Activated CD4-positive, alpha-beta memory T cell treated with anti-CD3 and anti-CD28 coated beads for 36 hours (primary cell): ENCODE measurements at regions of chr2 and their contacts with region 1.

Region 1: DNA sequence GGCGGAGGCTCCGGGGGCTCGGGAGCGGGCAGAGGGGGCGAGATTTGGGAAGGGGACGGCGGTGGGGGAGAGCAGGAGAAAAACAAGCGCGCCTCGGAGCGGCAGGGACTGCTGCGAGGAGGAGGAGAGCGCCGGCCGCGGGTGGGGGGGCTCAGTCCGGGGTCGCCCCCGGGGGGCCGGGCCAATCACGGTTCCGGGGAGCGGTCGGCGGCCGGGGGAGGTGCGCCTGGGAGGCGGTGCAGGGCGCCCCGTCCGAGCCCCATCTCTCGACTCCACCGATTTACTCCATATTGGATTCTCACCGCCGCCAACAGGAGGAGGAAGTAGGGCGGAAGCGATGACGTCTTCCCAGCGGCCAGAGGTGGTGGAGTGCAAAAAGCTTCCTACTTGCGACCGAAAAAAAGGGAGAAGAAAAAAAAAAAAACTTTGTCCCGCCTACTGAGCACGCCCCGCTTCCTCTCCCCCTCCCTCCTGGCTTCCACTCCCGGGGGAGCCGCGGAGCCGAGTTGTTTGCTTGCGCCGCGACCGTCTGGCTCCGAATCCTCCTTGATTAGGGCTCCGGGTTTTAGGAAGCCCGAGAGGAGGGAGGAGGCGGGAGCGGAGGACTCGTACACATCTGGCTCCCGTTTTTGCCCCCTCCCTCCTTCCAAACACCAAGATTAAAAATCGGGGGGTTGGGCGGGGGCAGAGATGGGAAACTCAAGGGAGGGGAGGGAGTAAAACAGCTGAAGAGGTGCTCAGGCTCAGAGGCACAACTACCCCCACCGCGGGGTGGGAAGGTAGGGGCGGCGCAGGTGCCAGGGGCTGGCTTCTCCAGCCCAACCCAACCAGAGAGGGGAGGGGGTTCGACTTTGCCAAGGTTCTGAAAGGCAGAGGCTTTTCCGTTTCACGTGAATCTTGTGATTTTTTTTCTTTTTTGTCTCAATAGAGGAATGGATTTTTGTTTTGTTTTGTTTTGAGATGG is at the start of gene SPRED2:
- DNase-seq: peak; percentile 86
- H3K4me3 Mint-ChIP-seq: peak within 1 kb of the TSS; percentile 88
- H3K27ac Mint-ChIP-seq: peak within 1 kb of the TSS; percentile 74
- H3K4me1 Mint-ChIP-seq: peaks cover 13% of the 10 kb centered on the region
- H3K27me3 Mint-ChIP-seq: peaks cover 22% of the 10 kb centered on the region
- total RNA-seq, gene SPRED2: 6.1 to 8.9 TPM

Region 2: GRCh38 chr2:65056215-65057053 is 376.1 kb before region 1 on chr2 and contains the start of gene CEP68:
- CTCF ChIA-PET with region 1: no interaction called
- POLR2A ChIA-PET with region 1: no interaction called
- intact Hi-C with region 1: loop called (anchors 2 kb)
- DNase-seq: peak; percentile 98
- H3K4me3 Mint-ChIP-seq: peak within 1 kb of the TSS; percentile 94
- H3K27ac Mint-ChIP-seq: peak within 1 kb of the TSS; percentile 78
- H3K4me1 Mint-ChIP-seq: peaks cover 50% of the 10 kb centered on the region
- H3K27me3 Mint-ChIP-seq: no peaks in the 10 kb centered on the region
- total RNA-seq, gene CEP68: 6.6 to 8.0 TPM

Region 3: GRCh38 chr2:65227425-65228262 is 204.9 kb before region 1 on chr2 and contains the start of gene ACTR2:
- CTCF ChIA-PET with region 1: no interaction called
- POLR2A ChIA-PET with region 1: interaction called, 8 read pairs
- intact Hi-C with region 1: loop called (anchors 1 kb)
- DNase-seq: peak; percentile 97
- H3K4me3 Mint-ChIP-seq: peak within 1 kb of the TSS; percentile 100
- H3K27ac Mint-ChIP-seq: peak within 1 kb of the TSS; percentile 99
- H3K4me1 Mint-ChIP-seq: peaks cover 32% of the 10 kb centered on the region
- H3K27me3 Mint-ChIP-seq: no peaks in the 10 kb centered on the region
- total RNA-seq, gene ACTR2: 401 to 406 TPM

Region 4: GRCh38 chr2:65320042-65320725 is 112.3 kb before region 1 on chr2:
- CTCF ChIA-PET with region 1: interaction called, 5 read pairs
- POLR2A ChIA-PET with region 1: interaction called, 12 read pairs
- intact Hi-C with region 1: loop called (anchors 1 kb)
- DNase-seq: peak; percentile 56
- H3K4me3 Mint-ChIP-seq: no peak overlapping the region
- H3K27ac Mint-ChIP-seq: peak overlapping the region; percentile 89
- H3K4me1 Mint-ChIP-seq: peaks cover 24% of the 10 kb centered on the region
- H3K27me3 Mint-ChIP-seq: no peaks in the 10 kb centered on the region

Region 5: DNA sequence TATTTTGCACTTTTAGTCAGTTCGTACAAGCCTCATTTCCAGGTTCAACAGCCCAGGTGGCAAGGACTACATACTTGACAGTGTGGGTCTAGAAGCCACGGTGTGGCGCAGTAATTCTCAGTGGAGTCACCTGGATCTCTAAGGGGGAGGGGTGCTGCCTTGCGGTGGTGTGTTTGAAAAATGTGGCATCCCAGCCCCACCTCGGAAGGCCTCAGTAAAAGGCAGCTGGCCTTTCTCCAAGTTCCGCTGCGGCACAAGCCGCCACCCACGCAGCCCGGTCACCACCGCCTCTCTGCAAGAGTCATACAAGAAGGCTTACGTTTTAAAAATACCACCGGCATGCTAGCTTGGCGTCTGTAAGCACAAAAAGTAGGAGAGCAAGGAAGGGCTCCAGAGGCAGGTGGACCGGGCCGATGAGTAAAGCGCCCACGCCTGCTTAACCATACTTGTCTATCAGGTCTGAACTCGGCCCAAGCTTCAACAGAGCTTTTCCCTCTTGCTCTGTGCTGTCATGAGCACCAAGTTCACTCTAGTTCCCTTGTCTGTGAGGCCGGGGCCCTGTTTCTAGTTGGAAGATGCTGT is 49.6 kb before region 1 on chr2:
- CTCF ChIA-PET with region 1: interaction called, 6 read pairs
- POLR2A ChIA-PET with region 1: interaction called, 6 read pairs
- intact Hi-C with region 1: loop called (anchors 1 kb)
- DNase-seq: peak; percentile 96
- H3K4me3 Mint-ChIP-seq: no peak overlapping the region
- H3K27ac Mint-ChIP-seq: no peak overlapping the region
- H3K4me1 Mint-ChIP-seq: peaks cover 28% of the 10 kb centered on the region
- H3K27me3 Mint-ChIP-seq: peaks cover 4% of the 10 kb centered on the region

Region 6: DNA sequence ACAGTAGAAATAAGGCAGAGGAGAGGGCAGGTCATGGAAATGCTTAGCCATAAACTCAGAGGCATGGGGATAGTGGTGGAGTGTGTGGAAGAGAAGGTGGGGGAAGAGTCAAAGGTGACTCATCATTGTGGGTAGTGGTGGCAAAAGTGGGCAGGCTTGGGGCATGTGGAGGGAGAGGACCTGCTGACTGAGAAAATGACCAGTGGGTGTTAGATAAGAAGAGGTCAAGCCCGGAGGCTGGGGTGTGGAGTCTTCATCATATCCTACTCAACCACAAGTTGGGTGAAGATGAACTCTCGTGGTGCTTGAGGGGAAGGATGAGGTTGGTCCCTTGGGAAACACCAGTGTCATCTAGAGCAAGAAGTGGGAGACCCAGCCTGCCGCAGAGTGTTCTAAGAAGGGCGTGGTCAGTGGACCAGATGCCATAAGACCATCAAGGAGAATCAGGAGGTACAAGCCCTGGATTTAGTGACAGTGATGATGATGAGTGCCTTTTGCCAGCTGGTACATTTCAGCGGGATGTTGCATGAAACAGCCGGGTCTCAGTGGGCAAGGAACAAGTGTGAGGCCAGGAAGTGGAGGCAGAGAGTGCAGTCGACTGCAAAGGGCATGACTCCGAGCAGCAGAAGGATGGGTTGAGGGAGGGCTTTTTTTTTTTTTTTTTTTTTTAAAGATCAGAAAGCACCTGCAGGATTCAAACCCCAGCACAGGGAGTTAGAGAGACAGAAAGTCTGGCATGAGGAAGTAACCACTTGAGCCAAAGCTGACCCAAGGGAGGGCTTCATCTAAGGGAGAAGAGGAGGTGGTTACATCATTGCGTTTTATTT is 122.5 kb after region 1 on chr2:
- CTCF ChIA-PET with region 1: no interaction called
- POLR2A ChIA-PET with region 1: no interaction called
- intact Hi-C with region 1: loop called (anchors 2 kb)
- DNase-seq: peak; percentile 58
- H3K4me3 Mint-ChIP-seq: no peak overlapping the region
- H3K27ac Mint-ChIP-seq: no peak overlapping the region
- H3K4me1 Mint-ChIP-seq: peaks cover 11% of the 10 kb centered on the region
- H3K27me3 Mint-ChIP-seq: peaks cover 6% of the 10 kb centered on the region